Heart right ventricle (tissue), 16 donors: ENCODE measurements at regions of chr12 and their contacts with region 1.

Region 1: GRCh38 chr12:106205208-106206071 is 42.4 kb downstream of the CKAP4 start:
- DNase-seq: peak; percentile 51 to 70
- ATAC-seq: peak; percentile 89 to 100 (median 98)
- H3K4me3 ChIP-seq: no peak overlapping the region
- H3K27ac ChIP-seq: no peak overlapping the region
- H3K4me1 ChIP-seq: no peaks in the 10 kb centered on the region
- H3K27me3 ChIP-seq: no peaks in the 10 kb centered on the region
- CTCF ChIP-seq: peak; percentile 16 to 67 (median 46)

Region 2: GRCh38 chr12:105705765-105706164 is 499.7 kb before region 1 on chr12:
- intact Hi-C with region 1: loop called in 1 of 10 experiments (anchors 10 kb)
- DNase-seq: peak in 1 of 2 donors; percentile 74
- ATAC-seq: peak; percentile 34 to 79 (median 62)
- H3K4me3 ChIP-seq: no peak overlapping the region
- H3K27ac ChIP-seq: peak overlapping the region in 8 of 10 donors; percentile 22 to 64 (median 46)
- H3K4me1 ChIP-seq: peaks cover 0 to 21% (median 12%) of the 10 kb centered on the region in 9 donors
- H3K27me3 ChIP-seq: no peaks in the 10 kb centered on the region
- CTCF ChIP-seq: peak; percentile 62 to 95 (median 87)

Region 3: GRCh38 chr12:106149096-106149784 is 56.2 kb before region 1 on chr12:
- intact Hi-C with region 1: loop called in 1 of 10 experiments (anchors 10 kb)
- DNase-seq: no peak
- ATAC-seq: no peak
- H3K4me3 ChIP-seq: no peak overlapping the region
- H3K27ac ChIP-seq: peak overlapping the region in 2 of 10 donors; percentile 78 to 80
- H3K4me1 ChIP-seq: peaks cover 11 to 51% (median 30%) of the 10 kb centered on the region in 9 donors
- H3K27me3 ChIP-seq: no peaks in the 10 kb centered on the region
- CTCF ChIP-seq: peak in 8 of 9 donors; percentile 23 to 72 (median 54)

Region 4: DNA sequence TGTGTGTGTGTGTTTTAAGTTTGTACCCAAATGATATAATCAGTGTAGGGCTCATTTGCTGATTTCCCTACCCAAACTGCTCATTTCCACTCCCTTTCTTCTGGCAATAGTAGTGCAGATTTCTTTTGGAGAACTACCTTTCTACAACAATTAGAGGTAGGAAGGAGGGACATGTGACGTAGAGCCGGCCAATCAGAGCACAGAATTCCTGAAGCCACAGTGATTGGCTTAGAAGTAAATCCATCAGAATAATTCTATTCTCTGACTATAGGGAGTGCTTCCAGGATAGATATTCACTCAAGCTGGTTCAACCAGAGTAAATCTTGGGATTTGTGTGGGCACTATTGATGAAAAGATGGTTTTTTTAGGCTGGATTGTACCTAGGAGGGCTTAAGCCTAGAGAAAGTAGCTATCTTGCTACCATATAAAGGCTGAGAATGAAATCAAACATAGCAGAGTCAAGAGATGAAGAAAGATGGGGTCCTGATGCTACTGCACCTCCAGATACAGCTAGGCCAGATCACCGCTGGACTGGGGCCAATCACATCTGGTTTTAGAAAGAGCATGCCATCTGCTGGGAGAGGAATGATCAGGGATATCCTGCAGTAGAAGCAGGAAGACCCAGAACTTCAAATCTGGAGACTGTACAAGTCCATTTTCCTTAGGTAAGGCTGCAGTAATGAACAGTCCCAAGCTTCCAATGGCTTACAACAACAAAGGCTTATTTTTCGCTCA is 12.6 kb before region 1 on chr12:
- intact Hi-C with region 1: no loop called
- DNase-seq: no peak
- ATAC-seq: no peak
- H3K4me3 ChIP-seq: no peak overlapping the region
- H3K27ac ChIP-seq: no peak overlapping the region
- H3K4me1 ChIP-seq: peaks cover 0 to 27% (median 11%) of the 10 kb centered on the region in 9 donors
- H3K27me3 ChIP-seq: no peaks in the 10 kb centered on the region
- CTCF ChIP-seq: no peak